HEK293 (cell line): ENCODE measurements at regions of chr9 and their contacts with region 1.

Region 1: GRCh38 chr9:70602321-70603019 is 188.0 kb upstream of the KLF9 start:
- H3K4me3 ChIP-seq: no peak overlapping the region
- H3K27ac ChIP-seq: peak overlapping the region; percentile 93; the same call in 1 of the 2 replicates
- H3K4me1 ChIP-seq: peaks cover 9% of the 10 kb centered on the region
- CTCF ChIP-seq: peak; percentile 42; the same call in 1 of the 2 replicates

Region 2: GRCh38 chr9:70120834-70121510 is 481.5 kb before region 1 on chr9:
- CTCF ChIA-PET with region 1: interaction called, 14 read pairs
- POLR2A ChIA-PET with region 1: no interaction called
- H3K4me3 ChIP-seq: no peak overlapping the region
- H3K27ac ChIP-seq: no peak overlapping the region
- H3K4me1 ChIP-seq: no peaks in the 10 kb centered on the region
- CTCF ChIP-seq: no peak

Region 3: GRCh38 chr9:70352802-70353201 is 249.7 kb before region 1 on chr9:
- CTCF ChIA-PET with region 1: interaction called, 15 read pairs
- POLR2A ChIA-PET with region 1: interaction called, 3 read pairs
- H3K4me3 ChIP-seq: no peak overlapping the region
- H3K27ac ChIP-seq: no peak overlapping the region
- H3K4me1 ChIP-seq: no peaks in the 10 kb centered on the region
- CTCF ChIP-seq: no peak

Region 4: GRCh38 chr9:70418822-70419545 is 183.5 kb before region 1 on chr9:
- CTCF ChIA-PET with region 1: interaction called, 18 read pairs
- POLR2A ChIA-PET with region 1: interaction called, 127 read pairs
- H3K4me3 ChIP-seq: peak overlapping the region; percentile 60
- H3K27ac ChIP-seq: peak overlapping the region; percentile 100
- H3K4me1 ChIP-seq: peaks cover 8% of the 10 kb centered on the region
- CTCF ChIP-seq: no peak

Region 5: DNA sequence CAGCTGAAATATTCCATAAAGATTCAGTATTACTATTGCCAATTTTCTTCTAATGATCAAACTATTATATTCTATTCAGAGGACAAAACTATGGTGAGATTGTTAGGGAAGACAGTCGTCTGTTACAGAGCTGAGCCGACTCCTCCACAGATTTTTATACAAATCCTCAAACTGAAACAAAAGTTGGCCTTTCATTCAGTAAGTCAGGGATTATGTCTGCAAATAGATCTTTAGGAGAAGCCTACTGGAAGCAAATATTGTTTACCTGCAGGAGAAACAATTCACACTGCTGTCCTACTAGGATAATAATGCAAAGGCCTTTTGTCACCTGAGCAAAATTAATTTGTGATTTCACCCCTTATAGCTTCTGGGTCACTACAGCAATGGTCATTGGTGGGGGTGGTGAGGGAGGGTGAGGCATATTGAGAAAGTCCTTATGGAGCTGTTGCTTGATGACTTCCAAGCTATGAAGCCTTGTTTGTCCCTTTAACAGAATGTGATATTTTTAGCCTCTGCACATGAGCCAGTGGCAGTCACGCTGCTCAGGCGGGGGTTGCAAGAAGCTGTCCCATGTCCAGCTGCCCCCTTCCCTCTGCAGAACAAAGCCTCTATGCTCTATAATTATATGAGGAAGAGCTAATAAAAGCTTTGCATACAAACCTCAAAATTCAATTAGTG is 12.5 kb after region 1 on chr9:
- CTCF ChIA-PET with region 1: interaction called, 15 read pairs
- POLR2A ChIA-PET with region 1: interaction called, 6 read pairs
- H3K4me3 ChIP-seq: no peak overlapping the region
- H3K27ac ChIP-seq: no peak overlapping the region
- H3K4me1 ChIP-seq: no peaks in the 10 kb centered on the region
- CTCF ChIP-seq: no peak